Activated CD4-positive, alpha-beta T cell treated with anti-CD3 and anti-CD28 coated beads, Interleukin-2, amount 10 ng/mL, durations not matched to agents 24 days and 14 days (primary cell): ENCODE measurements at regions of chr5 and their contacts with region 1.

Region 1: DNA sequence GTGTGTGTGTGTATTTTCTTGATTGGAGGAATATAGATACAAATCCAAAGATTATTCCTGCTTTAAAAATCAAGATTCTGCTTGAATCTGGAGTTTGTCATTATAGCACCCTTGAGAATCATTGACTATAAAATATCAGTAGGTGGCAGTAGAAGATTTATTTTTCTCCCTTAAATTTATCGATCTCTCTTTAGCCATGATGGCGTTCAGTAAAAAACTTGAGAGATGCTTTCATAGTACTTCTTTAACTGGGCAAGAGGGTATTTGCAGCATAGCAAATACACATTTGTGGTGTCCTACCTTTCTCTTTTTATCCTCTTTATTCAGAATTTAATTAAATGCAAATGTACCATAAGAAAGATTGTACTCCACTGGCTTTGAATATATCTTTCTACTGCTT is 307.7 kb downstream of the ADGRV1 start:
- DNase-seq: no peak
- H3K4me3 Mint-ChIP-seq: no peak overlapping the region
- H3K27ac Mint-ChIP-seq: no peak overlapping the region
- H3K4me1 Mint-ChIP-seq: no peaks in the 10 kb centered on the region
- H3K27me3 Mint-ChIP-seq: peaks cover 21% of the 10 kb centered on the region

Region 2: GRCh38 chr5:90813392-90813791 is 52.9 kb before region 1 on chr5:
- intact Hi-C with region 1: no loop called
- DNase-seq: no peak
- H3K4me3 Mint-ChIP-seq: no peak overlapping the region
- H3K27ac Mint-ChIP-seq: no peak overlapping the region
- H3K4me1 Mint-ChIP-seq: no peaks in the 10 kb centered on the region
- H3K27me3 Mint-ChIP-seq: no peaks in the 10 kb centered on the region

Region 3: GRCh38 chr5:90909101-90909503 is 42.8 kb after region 1 on chr5:
- intact Hi-C with region 1: no loop called
- DNase-seq: no peak
- H3K4me3 Mint-ChIP-seq: no peak overlapping the region
- H3K27ac Mint-ChIP-seq: no peak overlapping the region
- H3K4me1 Mint-ChIP-seq: no peaks in the 10 kb centered on the region
- H3K27me3 Mint-ChIP-seq: peaks cover 10% of the 10 kb centered on the region

Region 4: GRCh38 chr5:90932052-90932699 is 65.8 kb after region 1 on chr5:
- intact Hi-C with region 1: loop called (anchors 2 kb)
- DNase-seq: peak; percentile 78
- H3K4me3 Mint-ChIP-seq: no peak overlapping the region
- H3K27ac Mint-ChIP-seq: no peak overlapping the region
- H3K4me1 Mint-ChIP-seq: peaks cover 4% of the 10 kb centered on the region
- H3K27me3 Mint-ChIP-seq: no peaks in the 10 kb centered on the region

Region 5: DNA sequence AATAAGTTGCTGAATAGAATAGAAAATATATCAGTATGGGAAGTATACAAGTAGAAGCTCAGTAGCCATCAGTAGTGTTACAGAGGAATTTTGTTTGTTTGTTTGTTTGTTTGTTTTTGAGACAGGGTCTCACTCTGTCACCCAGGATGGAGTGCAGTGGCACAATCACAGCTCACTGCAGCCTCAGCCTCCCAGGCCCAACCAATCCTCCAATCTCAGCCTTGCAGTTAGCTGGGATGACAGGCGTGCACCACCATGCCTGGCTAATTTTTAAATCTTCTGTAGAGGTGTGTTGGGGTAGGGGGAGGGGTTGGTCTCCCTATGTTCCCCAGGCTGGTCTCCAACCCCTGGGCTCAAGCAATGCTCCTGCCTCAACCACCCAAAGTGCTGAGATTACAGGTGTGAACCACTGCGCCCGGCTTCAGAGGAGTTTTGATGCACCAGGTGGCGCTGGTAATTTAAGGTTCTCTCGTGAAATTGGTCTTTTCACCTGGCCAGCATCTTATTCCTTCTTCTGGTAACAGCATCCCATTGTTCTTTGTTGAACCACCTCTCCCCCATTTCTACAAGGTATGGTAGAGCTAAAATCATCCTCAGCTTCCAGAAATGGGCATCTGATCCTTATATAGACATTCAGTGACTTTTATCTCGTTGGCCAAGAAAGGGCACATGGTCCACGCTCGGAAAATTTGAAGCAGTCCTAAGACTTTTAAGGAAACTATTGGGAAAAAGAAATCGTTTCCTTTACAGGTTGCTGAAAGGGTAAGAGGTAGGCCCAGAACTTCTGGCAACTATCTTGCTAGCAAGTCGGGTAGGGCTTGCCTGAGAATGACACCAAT is 359.7 kb after region 1 on chr5:
- intact Hi-C with region 1: loop called (anchors 5 kb)
- DNase-seq: peak; percentile 87
- H3K4me3 Mint-ChIP-seq: no peak overlapping the region
- H3K27ac Mint-ChIP-seq: no peak overlapping the region
- H3K4me1 Mint-ChIP-seq: peaks cover 3% of the 10 kb centered on the region
- H3K27me3 Mint-ChIP-seq: peaks cover 26% of the 10 kb centered on the region

Region 6: DNA sequence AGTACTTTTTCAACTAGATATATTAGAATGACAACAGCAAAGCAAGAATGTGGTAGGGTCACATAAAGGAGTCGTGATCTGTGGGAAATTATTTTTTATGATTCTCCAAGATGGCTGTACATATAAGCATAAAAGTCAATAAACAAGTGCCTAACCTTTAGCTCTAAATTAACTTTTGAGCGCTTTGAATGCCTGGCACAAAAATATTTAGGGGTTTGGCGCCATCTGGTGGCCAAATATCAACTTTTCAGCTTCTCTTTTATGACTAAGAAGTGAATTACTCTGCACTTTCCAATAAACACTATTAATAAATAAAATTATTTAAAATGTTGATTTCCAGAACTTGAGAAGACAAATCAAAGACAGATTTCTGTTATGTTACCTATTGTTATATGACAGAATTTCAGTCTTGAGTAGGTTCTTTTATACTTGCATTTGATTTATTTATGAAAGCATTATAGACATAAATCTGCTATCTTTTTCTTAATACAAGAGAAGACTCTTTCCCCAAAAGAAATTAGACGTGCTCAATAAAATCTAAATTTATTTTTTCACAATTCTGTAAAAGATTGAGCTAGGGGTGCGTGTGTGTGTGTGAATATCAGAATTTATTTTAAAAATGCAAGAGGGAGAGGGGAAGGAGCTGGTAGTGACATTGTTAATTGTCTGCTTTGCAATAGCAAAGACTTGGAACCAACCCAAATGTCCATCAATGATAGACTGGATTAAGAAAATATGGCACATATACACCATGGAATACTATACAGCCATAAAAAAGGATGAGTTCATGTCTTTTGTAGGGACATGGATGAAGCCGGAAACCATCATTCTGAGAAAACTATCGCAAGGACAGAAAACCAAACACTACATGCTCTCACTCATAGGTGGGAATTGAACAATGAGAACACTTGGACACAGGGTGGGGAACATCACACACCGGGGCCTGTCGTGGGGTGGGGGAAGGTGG is 553.5 kb after region 1 on chr5:
- intact Hi-C with region 1: loop called (anchors 1 kb)
- DNase-seq: peak; percentile 88
- H3K4me3 Mint-ChIP-seq: no peak overlapping the region
- H3K27ac Mint-ChIP-seq: no peak overlapping the region
- H3K4me1 Mint-ChIP-seq: no peaks in the 10 kb centered on the region
- H3K27me3 Mint-ChIP-seq: peaks cover 6% of the 10 kb centered on the region